Left ventricle myocardium superior (tissue), 1 donor: ENCODE measurements at regions of chr3 and their contacts with region 1.

Region 1: GRCh38 chr3:113649174-113649845 is 47.1 kb downstream of the USF3 start:
- DNase-seq: no peak
- ATAC-seq: no peak

Region 2: DNA sequence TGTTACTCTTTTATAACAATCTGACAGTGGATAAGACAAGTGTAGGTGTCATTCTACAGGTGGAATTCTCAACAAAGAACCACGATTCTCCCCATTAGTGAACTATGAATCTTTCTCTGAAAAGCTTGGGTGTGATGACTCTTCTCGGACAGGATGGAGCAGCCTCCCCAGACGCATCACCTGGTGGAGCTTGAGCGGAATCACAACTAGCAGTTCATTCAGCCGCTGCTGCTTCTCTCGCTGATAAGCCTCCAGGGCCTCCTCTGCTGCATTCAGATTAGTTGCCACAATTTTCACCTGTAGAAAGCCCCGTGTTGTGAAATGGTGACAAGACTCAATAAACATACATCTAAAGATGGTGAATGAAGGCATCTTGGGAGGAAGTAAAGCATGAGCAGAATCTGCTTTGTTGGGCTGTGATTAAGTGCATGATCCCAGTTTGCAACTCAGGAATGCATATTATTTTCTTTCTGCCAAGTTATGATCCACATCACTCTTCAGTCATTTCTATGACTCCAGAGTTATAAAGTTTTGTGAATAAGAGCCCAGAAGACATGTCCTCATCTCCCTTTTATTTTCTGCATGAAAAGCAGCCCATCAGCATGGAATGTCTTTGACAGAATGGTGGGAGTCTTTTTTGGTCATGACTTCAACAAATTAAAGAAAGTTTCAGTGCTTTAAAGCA is 344.3 kb before region 1 on chr3:
- intact Hi-C with region 1: loop called (anchors 10 kb)
- DNase-seq: no peak
- ATAC-seq: no peak

Region 3: DNA sequence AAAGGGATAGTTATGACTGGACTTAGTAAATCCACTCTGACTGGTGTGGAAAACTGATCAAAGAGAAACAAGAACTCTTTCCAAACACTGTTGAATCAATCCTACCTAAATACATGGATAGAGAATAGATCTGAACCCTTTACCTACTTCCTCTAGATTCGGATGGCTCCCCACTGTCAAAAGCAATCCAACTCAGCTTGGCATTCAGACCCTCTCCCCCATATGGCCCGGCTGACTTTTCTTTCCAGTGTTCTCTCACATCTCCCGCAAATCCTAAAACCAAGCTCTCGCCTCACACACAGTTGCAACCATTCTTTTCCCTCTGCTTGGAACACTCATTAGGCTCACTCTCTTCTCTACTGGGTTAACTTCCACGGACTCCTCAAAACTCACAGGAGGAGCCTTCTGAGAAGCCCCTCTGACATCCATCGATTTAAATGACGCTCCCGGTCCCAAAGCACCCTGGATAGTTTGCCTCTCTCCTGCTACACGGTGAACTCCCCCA is 135.0 kb before region 1 on chr3:
- intact Hi-C with region 1: no loop called
- DNase-seq: no peak
- ATAC-seq: peak; percentile 18